Activated B cell treated with CpG ODN at 0.5 μM for 24 hours (primary cell): ENCODE measurements at regions of chr20 and their contacts with region 1.

Region 1: DNA sequence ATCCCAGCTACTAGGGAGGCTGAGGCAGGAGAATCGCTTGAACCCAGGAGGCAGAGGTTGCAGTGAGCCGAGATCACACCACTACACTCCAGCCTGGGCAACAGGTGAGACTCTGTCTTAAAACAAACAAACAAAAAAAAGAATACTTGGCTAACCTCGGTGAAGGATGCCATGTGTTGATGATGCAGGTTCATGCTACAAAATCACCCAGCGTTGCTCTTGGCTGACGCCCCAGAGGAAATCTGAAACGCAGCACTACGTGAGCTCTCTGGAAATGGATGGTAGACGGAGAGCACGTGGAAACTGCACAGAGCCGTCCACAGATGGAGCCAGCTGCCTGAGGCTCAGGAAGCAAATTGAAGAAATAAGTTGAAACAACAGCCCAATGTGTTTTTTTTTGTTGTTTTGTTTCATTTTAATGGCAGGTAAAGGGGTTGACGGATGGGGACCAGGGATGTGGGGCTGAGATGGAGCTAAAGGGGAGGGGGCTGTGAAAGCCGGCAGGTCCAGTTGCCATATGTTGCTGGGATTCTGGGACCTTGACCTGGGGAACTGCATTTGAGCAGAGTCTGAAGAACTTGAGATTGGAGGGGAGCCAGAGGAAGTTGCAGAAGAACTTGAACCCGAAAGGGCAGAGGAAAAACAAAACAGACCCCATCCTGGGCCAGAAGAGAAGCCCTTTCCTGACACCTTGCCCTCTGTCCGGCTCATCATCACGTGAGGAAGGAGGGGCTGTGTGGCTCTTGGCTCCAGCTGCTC is 12.8 kb upstream of the MANBAL start:
- DNase-seq: no peak
- ATAC-seq: peak; percentile 69
- H3K4me3 Mint-ChIP-seq: peak overlapping the region; percentile 39
- H3K27ac Mint-ChIP-seq: peak overlapping the region; percentile 81
- H3K4me1 Mint-ChIP-seq: peaks cover 47% of the 10 kb centered on the region
- H3K27me3 Mint-ChIP-seq: no peaks in the 10 kb centered on the region
- CTCF ChIP-seq: no peak

Region 2: DNA sequence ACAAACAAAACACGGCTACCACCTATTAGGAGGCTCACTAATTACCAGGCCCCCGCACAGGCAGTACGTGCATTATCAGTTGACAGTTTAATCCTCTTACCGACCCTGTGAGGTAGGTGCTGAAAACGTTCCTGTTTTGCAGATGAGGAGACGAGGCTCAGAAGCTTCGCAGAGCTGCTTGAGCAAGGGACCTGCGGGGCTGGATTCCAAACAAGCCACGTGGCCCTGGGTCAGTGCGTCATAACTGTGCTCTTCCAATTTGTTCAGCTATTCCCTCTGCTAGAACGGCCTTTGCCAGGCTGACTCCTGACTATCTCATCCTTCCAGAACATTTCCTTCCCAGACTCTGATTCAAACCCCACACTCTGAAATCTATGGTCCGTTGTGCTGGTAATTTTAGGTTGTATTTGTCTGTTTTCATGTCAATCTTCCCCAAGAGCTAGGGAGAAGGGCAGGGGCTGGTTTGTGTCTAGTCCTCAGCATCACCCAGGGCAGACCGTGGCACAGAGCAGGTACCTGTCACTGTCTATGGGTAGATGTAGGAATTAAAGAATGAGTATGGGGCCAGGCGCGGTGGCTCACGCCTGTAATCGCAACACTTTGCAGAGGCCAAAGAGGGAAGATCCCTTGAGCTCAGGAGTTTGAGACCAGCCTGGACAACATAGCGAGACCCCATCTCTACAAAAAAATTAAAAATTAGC is 429.5 kb before region 1 on chr20:
- CTCF ChIA-PET with region 1: no interaction called
- POLR2A ChIA-PET with region 1: no interaction called
- intact Hi-C with region 1: loop called (anchors 10 kb)
- DNase-seq: no peak
- ATAC-seq: no peak
- H3K4me3 Mint-ChIP-seq: peak overlapping the region; percentile 74
- H3K27ac Mint-ChIP-seq: peak overlapping the region; percentile 95
- H3K4me1 Mint-ChIP-seq: peaks cover 91% of the 10 kb centered on the region
- H3K27me3 Mint-ChIP-seq: no peaks in the 10 kb centered on the region
- CTCF ChIP-seq: no peak

Region 3: GRCh38 chr20:37288091-37288490 is 11.4 kb after region 1 on chr20:
- CTCF ChIA-PET with region 1: interaction called, 4 read pairs
- POLR2A ChIA-PET with region 1: interaction called, 44 read pairs
- intact Hi-C with region 1: loop called (anchors 1 kb)
- DNase-seq: no peak
- ATAC-seq: no peak
- H3K4me3 Mint-ChIP-seq: no peak overlapping the region
- H3K27ac Mint-ChIP-seq: no peak overlapping the region
- H3K4me1 Mint-ChIP-seq: peaks cover 35% of the 10 kb centered on the region
- H3K27me3 Mint-ChIP-seq: no peaks in the 10 kb centered on the region
- CTCF ChIP-seq: no peak

Region 4: GRCh38 chr20:37294262-37294981 is 17.7 kb after region 1 on chr20:
- CTCF ChIA-PET with region 1: interaction called, 4 read pairs
- POLR2A ChIA-PET with region 1: interaction called, 44 read pairs
- intact Hi-C with region 1: loop called (anchors 1 kb)
- DNase-seq: no peak
- ATAC-seq: no peak
- H3K4me3 Mint-ChIP-seq: no peak overlapping the region
- H3K27ac Mint-ChIP-seq: peak overlapping the region; percentile 15
- H3K4me1 Mint-ChIP-seq: peaks cover 62% of the 10 kb centered on the region
- H3K27me3 Mint-ChIP-seq: no peaks in the 10 kb centered on the region
- CTCF ChIP-seq: no peak

Region 5: DNA sequence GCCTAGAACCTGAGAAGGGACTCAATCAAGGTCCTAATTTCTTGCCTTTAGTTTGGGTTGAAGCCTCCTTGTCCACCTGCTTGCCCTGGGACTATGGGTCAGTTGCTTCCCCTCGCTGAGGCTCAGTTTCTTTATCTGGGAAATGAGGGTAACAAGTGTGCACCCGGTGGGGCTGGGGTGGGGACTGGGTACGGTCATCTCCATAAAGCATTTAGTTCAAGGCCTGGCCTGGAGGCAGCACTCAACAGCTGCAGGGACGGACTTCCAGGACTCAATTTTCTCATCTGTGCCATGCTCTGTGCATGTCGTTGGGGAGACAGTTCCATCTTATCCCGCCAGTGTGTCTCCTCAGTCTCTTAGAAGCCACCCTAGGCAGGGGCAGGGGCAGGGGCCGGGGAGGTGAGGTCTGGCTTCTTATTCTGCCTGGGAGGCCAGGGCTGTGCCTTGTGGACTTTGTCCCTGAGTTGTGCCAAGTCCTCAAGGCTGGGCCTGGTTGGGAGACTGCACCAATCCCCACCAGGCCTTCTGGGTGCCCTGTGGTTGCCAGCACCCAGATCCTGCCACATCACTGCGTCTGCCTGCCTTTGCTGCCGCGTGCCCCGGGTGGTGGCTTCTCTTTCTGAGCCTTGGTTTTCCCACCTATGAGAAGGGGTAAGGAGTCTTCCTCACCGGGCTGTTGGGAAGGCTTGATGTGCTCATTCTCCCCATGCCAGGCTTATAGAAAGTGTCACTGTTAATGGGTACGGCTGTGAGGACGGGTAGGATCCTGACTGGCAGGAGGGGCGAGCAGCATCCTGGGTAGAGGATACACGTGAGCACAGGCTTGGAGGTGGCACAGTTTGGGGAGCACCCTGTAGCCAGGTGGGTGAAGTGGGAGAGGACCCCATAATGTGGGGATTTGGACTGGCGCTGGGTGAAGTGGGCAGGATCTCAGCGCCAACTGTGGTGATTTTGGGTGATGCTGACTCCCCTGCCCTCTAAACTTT is 77.8 kb after region 1 on chr20:
- CTCF ChIA-PET with region 1: no interaction called
- POLR2A ChIA-PET with region 1: no interaction called
- intact Hi-C with region 1: no loop called
- DNase-seq: no peak
- ATAC-seq: no peak
- H3K4me3 Mint-ChIP-seq: no peak overlapping the region
- H3K27ac Mint-ChIP-seq: no peak overlapping the region
- H3K4me1 Mint-ChIP-seq: peaks cover 50% of the 10 kb centered on the region
- H3K27me3 Mint-ChIP-seq: no peaks in the 10 kb centered on the region
- CTCF ChIP-seq: no peak